ENCODE measurements at regions of chr22 and their contacts with region 1.

Region 1: DNA sequence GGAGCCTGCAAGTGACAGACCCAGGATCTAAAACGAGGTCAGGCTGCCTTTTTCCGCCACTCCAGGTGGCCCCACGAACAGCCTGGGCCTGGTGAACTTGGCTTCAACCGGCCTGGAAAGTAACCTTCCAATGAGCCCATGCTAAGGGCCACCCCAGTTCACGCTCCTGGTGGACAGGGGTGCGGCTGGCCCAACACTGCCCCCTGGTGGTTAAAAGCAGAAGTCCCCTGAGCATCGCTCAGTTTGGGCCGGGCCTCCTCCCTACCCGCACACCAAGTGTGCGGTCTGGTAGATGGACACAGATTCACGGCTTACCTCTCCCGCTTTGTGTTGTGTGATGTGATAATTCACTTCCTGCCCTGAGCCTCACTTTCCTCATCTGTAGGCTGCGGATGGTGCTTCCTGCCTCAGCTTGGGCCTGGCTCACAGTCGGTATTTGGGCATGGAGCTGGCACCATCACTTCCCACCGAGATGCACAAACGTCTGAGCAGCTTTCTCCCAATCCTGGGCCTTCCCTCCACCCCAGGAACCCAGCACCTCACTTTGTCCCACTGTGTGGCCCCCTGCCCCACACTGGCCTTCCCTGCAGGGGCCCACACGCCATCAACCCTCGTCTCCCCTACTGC is 13.7 kb upstream of the SEC14L3 start:
- DNase-seq: peak; percentile 94
- CTCF ChIP-seq: peak; percentile 88

Region 2: GRCh38 chr22:30444632-30445437 is 40.6 kb before region 1 on chr22:
- CTCF ChIA-PET with region 1: interaction called, 32 read pairs
- POLR2A ChIA-PET with region 1: no interaction called
- DNase-seq: peak; percentile 86
- CTCF ChIP-seq: peak; percentile 71

Region 3: GRCh38 chr22:30469165-30469564 is 16.3 kb before region 1 on chr22:
- CTCF ChIA-PET with region 1: interaction called, 16 read pairs
- POLR2A ChIA-PET with region 1: no interaction called
- DNase-seq: no peak
- CTCF ChIP-seq: no peak

Measured in GM10248 (cell line).